ENCODE measurements at regions of chr3 and their contacts with region 1.

Region 1: DNA sequence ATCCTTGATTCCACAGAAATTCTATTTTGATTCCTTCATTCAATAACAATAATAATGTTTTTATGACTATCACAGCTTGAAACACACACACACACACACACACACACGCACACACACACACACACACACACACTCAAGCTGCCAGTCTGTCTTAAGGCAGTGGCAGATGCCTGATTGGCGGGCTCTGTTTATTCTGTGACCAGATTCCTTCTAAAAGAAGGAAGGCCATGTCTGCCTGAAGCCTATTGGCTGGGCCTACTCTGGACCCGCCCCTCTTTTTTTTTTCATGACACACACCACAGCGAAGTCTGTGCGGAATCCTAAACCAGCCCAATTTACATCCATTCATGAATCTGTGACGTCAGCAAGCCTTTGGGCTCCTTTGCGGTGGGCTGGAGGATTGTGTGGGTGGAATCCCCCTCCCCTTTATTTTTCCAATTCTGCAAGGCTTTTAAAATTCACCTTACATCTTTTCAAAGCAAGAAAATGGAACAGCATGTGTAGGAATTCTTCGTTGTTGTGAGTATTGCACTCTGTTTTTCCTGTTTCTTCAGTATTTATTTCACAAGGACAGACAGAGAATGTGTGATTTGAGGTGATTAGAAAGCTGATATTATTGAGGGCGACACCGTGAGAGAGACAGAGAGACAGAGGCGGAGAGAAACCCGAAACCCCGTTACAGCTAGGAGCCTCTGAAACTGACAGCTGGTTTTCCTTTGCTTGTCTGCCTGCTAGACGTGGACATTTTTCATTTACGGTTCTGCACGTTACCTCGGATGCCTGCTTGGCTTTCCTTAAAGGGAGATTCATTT is at the start of gene MAP3K13:
- DNase-seq: peak; percentile 78 to 93
- H3K4me3 ChIP-seq: peak within 1 kb of the TSS; percentile 51 to 66
- H3K27ac ChIP-seq: peak within 1 kb of the TSS; percentile 5 to 35
- H3K4me1 ChIP-seq: peaks cover 0 to 7% of the 10 kb centered on the region in 2 donors
- H3K27me3 ChIP-seq: no peaks in the 10 kb centered on the region
- CTCF ChIP-seq: no peak
- total RNA-seq, gene MAP3K13: 21.9 TPM

Region 2: DNA sequence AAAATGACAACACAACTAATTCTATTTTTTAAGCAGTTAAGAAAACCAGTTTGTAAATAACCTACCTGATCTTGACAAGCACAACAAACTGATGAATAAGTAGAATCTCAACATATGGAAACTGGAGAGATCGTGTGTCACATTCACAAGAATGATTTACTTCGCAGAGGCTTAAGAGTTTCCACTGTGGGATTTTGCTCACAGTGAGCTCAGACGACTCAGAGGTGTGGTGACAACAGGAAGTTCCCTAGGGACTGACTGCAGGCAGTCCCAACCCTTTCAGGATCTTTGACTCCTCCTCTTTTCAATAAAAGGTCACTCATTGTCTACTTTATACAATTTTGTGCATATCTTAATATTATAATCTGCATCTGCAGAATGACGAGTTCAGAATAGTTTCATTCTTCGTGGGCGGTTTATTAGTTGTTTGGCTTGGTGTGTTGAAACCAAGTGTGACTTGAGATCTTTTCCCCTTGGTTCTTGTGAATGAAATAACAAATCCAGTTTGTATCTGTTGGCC is 189.4 kb after region 1 on chr3 and contains the start of gene LIPH:
- intact Hi-C with region 1: loop called (anchors 10 kb)
- DNase-seq: no peak
- H3K4me3 ChIP-seq: peak within 1 kb of the TSS in 1 of 2 donors; percentile 30
- H3K27ac ChIP-seq: no peak within 1 kb of the TSS
- H3K4me1 ChIP-seq: peaks cover 0 to 5% of the 10 kb centered on the region in 2 donors
- H3K27me3 ChIP-seq: no peaks in the 10 kb centered on the region
- CTCF ChIP-seq: no peak
- total RNA-seq, gene LIPH: 6.9 TPM

Measured in ascending aorta (tissue), 2 donors.